Esophagus squamous epithelium (tissue), 5 donors: ENCODE measurements at regions of chr2 and their contacts with region 1.

Region 1: DNA sequence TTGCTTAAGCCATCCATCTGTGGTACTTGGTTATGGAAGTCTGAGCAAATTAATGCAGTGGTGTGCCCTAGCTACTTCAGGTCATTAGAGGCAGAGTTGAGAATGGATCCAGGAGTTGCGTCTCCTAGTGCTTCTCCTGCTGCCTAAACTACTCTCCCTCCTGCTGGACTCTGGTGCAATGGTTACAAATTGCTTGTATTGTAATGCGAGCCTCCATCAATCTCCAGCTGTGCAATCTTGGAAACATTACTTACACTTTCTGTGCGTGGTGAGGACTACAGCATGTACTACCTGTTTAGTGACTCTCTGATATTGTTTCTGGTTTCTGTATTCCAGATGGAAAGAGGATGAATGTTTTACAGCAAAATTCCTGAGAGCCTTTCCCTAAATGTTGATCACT is 119.0 kb upstream of the CYRIA start:
- DNase-seq: no peak
- H3K4me3 ChIP-seq: no peak overlapping the region
- H3K27ac ChIP-seq: no peak overlapping the region
- H3K4me1 ChIP-seq: no peaks in the 10 kb centered on the region
- H3K27me3 ChIP-seq: no peaks in the 10 kb centered on the region
- CTCF ChIP-seq: no peak
- POLR2A ChIP-seq: no peak

Region 2: DNA sequence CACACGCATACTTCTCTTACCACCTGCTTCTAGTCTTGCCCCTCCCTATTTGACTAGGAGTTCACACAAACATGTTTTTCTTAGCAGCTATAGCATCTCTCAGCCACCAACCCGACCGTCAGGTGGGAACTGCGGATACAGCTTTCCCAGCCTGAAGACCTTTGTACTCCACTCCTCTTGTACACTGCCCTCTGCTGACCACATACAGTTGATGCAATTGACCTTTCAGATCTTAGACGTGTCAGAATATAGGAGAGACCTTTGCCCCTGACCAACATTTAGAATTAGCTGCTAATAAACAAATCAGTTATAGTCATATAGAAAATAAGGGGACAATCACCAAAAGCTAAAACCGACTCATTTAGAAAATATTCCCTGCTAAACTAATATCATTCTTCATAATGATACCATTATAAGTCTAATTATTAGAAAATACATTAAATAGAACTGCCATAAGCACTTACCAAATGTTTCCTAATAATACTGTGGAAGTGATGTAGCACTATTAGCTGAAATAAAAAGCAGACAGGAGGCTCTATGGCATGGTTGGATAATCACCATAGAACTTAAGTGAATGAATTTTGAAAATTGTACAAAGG is 525.2 kb after region 1 on chr2:
- intact Hi-C with region 1: loop called (anchors 10 kb)
- DNase-seq: no peak
- H3K4me3 ChIP-seq: no peak overlapping the region
- H3K27ac ChIP-seq: no peak overlapping the region
- H3K4me1 ChIP-seq: no peaks in the 10 kb centered on the region
- H3K27me3 ChIP-seq: no peaks in the 10 kb centered on the region
- CTCF ChIP-seq: peak; percentile 16 to 71 (median 57)
- POLR2A ChIP-seq: no peak